ENCODE measurements at regions of chr7 and their contacts with region 1.

Region 1: GRCh38 chr7:50610521-50611277 is 45.5 kb upstream of the DDC start:
- DNase-seq: peak; percentile 71
- H3K4me3 Mint-ChIP-seq: no peak overlapping the region
- H3K27ac Mint-ChIP-seq: no peak overlapping the region
- H3K4me1 Mint-ChIP-seq: peaks cover 30% of the 10 kb centered on the region
- H3K27me3 Mint-ChIP-seq: no peaks in the 10 kb centered on the region

Region 2: DNA sequence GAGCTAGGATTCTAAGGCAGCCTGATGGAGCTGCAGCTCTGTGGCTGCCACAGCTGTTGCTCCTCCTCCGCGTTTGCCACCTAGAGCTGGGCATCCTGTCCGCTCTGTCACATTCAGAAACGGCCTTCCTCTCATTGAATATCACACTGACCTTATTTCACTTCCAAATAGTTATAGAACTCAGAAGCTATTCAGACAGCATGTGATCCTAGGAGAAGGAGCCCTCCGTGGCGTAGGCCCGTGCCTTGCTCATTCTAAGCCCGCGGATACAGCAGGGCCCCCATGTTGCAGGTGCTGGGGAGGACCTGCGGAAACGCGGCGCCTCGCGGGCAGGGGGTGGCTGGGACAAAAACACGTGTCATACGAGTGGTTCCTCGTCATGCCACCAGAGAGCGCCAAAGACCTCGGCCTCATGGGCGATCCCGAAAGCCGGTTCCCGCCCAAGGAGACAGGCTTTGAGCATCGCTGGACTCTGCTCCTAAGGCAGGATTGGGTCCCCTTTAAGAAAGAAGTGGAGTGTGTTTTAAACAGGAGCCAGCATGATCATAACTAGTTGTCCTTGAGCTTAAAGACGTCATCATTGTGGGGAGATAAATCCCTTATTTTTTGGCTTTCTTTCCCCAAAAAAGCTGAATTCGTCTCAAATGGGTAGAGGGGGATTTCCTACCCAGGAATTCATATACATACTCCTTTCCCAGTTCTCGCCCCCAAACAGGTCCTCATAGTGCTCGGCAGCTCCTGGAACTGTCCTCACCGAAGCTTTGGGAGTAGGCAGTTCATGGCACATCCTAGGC is 142.7 kb before region 1 on chr7:
- CTCF ChIA-PET with region 1: interaction called, 17 read pairs
- POLR2A ChIA-PET with region 1: no interaction called
- intact Hi-C with region 1: no loop called
- DNase-seq: peak; percentile 89
- H3K4me3 Mint-ChIP-seq: no peak overlapping the region
- H3K27ac Mint-ChIP-seq: no peak overlapping the region
- H3K4me1 Mint-ChIP-seq: peaks cover 12% of the 10 kb centered on the region
- H3K27me3 Mint-ChIP-seq: peaks cover 2% of the 10 kb centered on the region

Region 3: GRCh38 chr7:50534690-50535290 is 75.9 kb before region 1 on chr7:
- CTCF ChIA-PET with region 1: no interaction called
- POLR2A ChIA-PET with region 1: no interaction called
- intact Hi-C with region 1: loop called (anchors 5 kb)
- DNase-seq: peak; percentile 33
- H3K4me3 Mint-ChIP-seq: no peak overlapping the region
- H3K27ac Mint-ChIP-seq: no peak overlapping the region
- H3K4me1 Mint-ChIP-seq: peaks cover 27% of the 10 kb centered on the region
- H3K27me3 Mint-ChIP-seq: peaks cover 7% of the 10 kb centered on the region

Region 4: GRCh38 chr7:50632561-50633413 is 22.1 kb after region 1 on chr7:
- CTCF ChIA-PET with region 1: interaction called, 18 read pairs
- POLR2A ChIA-PET with region 1: no interaction called
- intact Hi-C with region 1: no loop called
- DNase-seq: peak; percentile 65
- H3K4me3 Mint-ChIP-seq: no peak overlapping the region
- H3K27ac Mint-ChIP-seq: no peak overlapping the region
- H3K4me1 Mint-ChIP-seq: peaks cover 7% of the 10 kb centered on the region
- H3K27me3 Mint-ChIP-seq: peaks cover 2% of the 10 kb centered on the region

Region 5: GRCh38 chr7:50832744-50833143 is 222.0 kb after region 1 on chr7:
- CTCF ChIA-PET with region 1: no interaction called
- POLR2A ChIA-PET with region 1: no interaction called
- intact Hi-C with region 1: loop called (anchors 5 kb)
- DNase-seq: peak; percentile 51
- H3K4me3 Mint-ChIP-seq: no peak overlapping the region
- H3K27ac Mint-ChIP-seq: no peak overlapping the region
- H3K4me1 Mint-ChIP-seq: peaks cover 17% of the 10 kb centered on the region
- H3K27me3 Mint-ChIP-seq: peaks cover 33% of the 10 kb centered on the region

Region 6: GRCh38 chr7:51187941-51188340 is 577.2 kb after region 1 on chr7:
- CTCF ChIA-PET with region 1: no interaction called
- POLR2A ChIA-PET with region 1: no interaction called
- intact Hi-C with region 1: no loop called
- DNase-seq: no peak
- H3K4me3 Mint-ChIP-seq: no peak overlapping the region
- H3K27ac Mint-ChIP-seq: no peak overlapping the region
- H3K4me1 Mint-ChIP-seq: no peaks in the 10 kb centered on the region
- H3K27me3 Mint-ChIP-seq: peaks cover 2% of the 10 kb centered on the region